MCF 10A (cell line): ENCODE measurements at regions of chr17 and their contacts with region 1.

Region 1: DNA sequence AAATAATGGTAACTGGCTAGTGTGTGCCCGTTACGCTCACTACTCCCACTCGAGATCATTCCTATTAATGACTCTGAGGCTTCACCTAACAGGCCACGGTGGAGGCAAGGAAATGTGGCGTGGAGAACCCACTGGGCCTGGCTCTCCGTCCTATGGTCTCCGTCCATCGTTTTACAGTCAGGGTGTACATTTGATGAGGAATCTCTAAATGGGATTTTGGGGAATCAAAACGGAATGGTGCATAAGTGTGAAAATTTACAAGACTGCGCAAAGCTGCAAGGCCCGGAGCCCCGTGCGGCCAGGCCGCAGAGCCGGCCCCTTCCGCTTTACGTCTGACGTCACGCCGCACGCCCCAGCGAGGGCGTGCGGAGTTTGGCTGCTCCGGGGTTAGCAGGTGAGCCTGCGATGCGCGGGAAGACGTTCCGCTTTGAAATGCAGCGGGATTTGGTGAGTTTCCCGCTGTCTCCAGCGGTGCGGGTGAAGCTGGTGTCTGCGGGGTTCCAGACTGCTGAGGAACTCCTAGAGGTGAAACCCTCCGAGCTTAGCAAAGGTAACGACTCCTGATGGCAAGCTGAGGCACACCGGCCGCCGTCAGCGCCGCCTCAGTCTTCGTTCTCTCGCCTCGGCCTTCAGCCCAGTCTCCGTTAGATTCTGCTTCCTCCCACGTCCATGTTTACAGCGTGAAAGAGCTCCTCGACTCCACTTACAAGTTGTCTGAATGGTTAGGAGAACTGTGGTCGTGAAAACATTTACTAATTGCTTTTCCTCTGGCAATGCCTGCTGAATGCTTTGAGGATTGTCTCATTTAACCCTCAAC is at the start of gene RAD51C:
- DNase-seq: peak; percentile 84
- H3K4me3 Mint-ChIP-seq: peak within 1 kb of the TSS; percentile 97
- H3K27ac Mint-ChIP-seq: peak within 1 kb of the TSS; percentile 91
- H3K4me1 Mint-ChIP-seq: peaks cover 12% of the 10 kb centered on the region
- H3K27me3 Mint-ChIP-seq: no peaks in the 10 kb centered on the region
- CTCF ChIP-seq: no peak
- total RNA-seq, gene RAD51C: 48.3 and 59.5 TPM in 2 replicates

Region 2: DNA sequence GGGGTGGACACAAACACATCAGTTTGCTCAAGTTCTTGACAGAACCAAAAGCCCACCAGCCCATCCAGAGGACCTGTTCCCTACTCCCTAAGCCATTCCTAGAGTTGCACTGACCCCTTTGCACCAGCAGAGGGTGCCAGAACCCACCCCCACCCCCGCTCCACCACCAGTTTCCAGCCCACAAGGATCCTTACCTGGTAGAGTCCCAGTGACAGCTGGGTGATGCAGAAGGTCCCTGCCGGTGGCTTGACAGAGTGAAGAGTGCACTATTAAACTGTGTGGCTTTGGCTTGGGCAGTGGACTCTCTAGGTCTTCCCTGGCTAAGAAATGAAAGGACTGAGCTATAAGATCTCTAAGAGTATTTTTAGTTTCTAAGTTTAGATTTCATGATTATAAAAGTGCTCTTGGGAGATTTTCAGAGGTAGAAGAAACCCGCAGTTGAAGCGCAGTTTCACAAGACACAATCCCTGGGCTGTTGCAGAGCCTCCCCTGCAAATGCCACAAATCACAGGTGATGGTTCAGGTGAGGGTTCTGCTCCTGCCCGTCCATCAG is 104.7 kb before region 1 on chr17:
- CTCF ChIA-PET with region 1: interaction called, 5 read pairs
- POLR2A ChIA-PET with region 1: interaction called, 3 read pairs
- intact Hi-C with region 1: loop called (anchors 1 kb)
- DNase-seq: peak; percentile 65
- H3K4me3 Mint-ChIP-seq: no peak overlapping the region
- H3K27ac Mint-ChIP-seq: no peak overlapping the region
- H3K4me1 Mint-ChIP-seq: no peaks in the 10 kb centered on the region
- H3K27me3 Mint-ChIP-seq: peaks cover 13% of the 10 kb centered on the region
- CTCF ChIP-seq: peak; percentile 89

Region 3: DNA sequence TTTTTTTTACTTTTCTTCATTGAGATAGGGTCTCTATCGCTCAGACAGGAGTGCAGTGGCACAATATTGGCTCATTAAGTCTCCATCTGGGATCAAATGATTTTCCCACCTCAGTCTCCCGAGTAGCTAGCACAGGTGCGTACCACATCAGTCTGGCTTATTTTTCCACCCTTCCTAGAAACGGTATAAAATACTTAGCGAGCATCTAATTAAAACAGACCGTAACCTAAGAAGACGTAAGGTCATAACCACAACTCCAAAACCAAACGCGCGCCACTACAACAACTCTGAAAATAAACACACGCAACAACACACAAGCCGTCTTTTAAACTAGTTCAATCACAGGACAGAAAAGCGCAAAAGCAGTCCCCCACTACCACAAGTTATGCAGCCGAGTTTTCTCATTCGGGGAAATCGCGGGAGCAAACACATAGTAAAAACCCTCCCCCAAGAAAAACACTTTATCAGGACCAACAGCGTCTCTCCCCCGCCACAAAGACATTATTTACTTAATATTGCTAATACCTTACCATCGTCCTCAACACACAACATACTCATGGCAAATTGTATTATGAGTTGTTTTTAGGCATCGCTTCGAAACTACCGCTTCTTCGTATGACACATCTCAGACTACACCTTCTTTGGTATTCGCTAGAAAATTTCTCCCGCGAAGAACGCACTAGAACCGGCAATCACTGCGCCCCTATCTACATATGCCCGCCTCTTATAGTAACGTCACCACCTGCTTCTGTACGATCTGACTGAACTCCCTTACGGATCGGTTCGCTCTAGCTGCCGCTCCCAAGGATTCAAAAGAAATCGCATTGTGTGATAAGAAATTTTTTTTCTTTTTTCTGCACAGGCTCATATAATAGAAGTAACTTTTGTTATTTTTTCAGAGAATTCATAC is 33.4 kb before region 1 on chr17:
- CTCF ChIA-PET with region 1: no interaction called
- POLR2A ChIA-PET with region 1: interaction called, 13 read pairs
- intact Hi-C with region 1: no loop called
- DNase-seq: peak; percentile 97
- H3K4me3 Mint-ChIP-seq: peak overlapping the region; percentile 69
- H3K27ac Mint-ChIP-seq: peak overlapping the region; percentile 99
- H3K4me1 Mint-ChIP-seq: peaks cover 13% of the 10 kb centered on the region
- H3K27me3 Mint-ChIP-seq: no peaks in the 10 kb centered on the region
- CTCF ChIP-seq: no peak

Region 4: GRCh38 chr17:58679263-58680037 is 13.0 kb before region 1 on chr17:
- CTCF ChIA-PET with region 1: interaction called, 5 read pairs
- POLR2A ChIA-PET with region 1: interaction called, 28 read pairs
- intact Hi-C with region 1: no loop called
- DNase-seq: peak; percentile 87
- H3K4me3 Mint-ChIP-seq: peak overlapping the region; percentile 44
- H3K27ac Mint-ChIP-seq: peak overlapping the region; percentile 65
- H3K4me1 Mint-ChIP-seq: peaks cover 12% of the 10 kb centered on the region
- H3K27me3 Mint-ChIP-seq: no peaks in the 10 kb centered on the region
- CTCF ChIP-seq: no peak

Region 5: DNA sequence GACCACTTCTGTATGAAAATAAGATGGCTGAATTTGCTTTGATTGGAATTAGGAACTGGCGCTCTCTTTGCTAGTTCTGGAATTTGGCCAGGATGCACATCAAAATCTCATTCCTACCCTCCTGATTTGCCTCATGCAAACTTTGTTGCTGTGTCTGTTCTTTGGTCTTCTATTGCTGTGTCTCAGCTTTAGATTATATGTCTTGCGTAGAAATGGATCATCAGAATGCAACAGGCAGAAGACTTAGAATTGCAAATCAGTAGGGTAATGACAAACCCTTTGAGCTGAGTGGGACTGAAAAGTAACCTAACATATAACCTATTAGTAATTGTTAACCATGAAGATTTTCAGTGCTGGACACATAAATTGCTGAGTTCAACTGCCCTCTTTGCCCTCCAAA is 30.2 kb after region 1 on chr17:
- CTCF ChIA-PET with region 1: no interaction called
- POLR2A ChIA-PET with region 1: no interaction called
- intact Hi-C with region 1: no loop called
- DNase-seq: no peak
- H3K4me3 Mint-ChIP-seq: no peak overlapping the region
- H3K27ac Mint-ChIP-seq: no peak overlapping the region
- H3K4me1 Mint-ChIP-seq: no peaks in the 10 kb centered on the region
- H3K27me3 Mint-ChIP-seq: no peaks in the 10 kb centered on the region
- CTCF ChIP-seq: no peak

Region 6: DNA sequence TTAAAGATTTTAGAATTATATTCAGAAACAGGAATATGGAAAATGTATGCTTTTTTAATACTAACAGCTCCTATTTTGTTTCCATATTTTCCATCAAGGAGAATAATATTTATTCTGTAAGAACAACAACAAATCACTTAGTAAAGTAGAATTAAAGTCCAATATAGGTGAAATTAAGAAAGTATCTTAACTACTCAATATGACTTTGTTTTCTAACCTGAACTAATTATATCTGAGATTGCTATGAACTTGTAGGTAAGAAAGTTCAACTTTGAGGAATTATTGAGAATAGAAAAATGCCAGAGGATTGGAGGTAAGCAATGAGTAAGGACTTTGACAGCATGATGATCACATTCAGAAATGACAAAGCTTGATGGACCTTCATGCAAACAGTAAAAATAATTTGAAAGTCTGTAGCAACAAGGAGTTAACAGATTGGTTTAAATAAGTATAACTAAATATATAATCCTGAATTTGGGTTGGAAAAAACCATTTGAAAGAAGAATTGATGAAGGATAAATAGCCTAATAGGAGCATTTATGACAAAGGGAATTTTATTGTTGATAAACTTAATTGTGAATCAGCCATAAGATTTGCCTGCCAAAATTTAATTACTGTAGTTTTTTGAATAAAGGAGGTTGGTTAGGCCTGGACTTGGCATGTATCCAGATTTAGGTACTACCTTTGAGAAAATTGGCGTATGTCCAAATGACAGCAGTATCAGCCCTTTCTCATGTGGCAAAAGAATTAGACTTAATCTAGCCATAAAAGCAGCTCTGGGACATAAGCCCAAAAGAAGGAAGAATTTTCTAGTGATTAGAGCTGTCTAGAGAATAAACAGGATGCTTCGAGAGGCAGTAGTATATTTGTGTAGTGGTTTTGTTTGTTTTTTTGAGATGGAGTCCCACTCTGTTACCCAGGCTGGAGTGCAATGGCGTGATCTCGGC is 90.7 kb after region 1 on chr17:
- CTCF ChIA-PET with region 1: no interaction called
- POLR2A ChIA-PET with region 1: no interaction called
- intact Hi-C with region 1: no loop called
- DNase-seq: peak; percentile 67
- H3K4me3 Mint-ChIP-seq: no peak overlapping the region
- H3K27ac Mint-ChIP-seq: no peak overlapping the region
- H3K4me1 Mint-ChIP-seq: no peaks in the 10 kb centered on the region
- H3K27me3 Mint-ChIP-seq: no peaks in the 10 kb centered on the region
- CTCF ChIP-seq: no peak